Endothelial cell of umbilical vein (primary cell): ENCODE measurements at regions of chr1 and their contacts with region 1.

Region 1: DNA sequence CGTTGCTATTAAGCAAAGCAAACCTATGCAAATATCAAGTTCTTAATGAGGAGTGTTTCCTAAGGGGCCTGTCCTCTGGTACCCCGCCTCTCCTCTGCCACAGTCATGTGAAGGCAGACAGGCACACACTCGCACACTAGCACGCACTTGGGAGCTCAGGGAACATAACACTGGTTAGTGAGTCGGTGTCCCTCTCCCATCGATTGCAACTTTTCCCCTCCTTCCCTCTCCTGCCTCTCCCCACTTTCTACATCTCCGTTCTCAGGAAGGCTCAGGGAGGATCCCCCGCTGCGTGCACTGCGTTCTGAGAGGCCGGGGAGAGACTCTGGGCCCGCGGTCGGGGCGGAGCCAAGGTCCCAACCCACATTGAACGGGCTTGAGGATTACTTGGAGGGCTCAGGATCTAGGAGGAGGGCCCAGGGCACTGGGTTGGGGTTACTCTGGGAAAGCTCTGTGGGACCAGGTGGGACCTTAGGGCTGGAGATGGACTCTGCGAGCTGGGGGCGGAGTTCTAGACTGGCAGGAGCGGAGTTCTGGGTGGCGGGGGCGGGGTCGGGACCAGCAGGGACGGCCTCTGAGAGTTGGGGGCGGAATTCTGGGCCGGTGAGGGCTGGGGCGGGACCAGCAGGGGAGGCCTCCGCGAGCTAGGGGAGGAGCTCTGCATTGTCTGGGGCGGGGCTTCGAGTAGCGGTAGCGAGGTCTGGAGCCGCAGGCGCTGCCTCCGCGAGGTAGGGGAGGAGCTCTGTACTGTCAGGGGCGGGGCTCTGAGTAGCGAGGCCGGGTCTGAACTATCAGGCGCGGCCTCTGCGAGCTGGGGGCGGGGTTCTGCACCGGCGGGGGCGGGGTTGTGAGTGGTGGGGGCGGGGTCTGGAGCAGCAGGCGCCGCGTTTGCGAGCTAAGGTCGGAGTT is 533 bp upstream of the LEPR start:
- DNase-seq: peak; percentile 99
- H3K4me3 ChIP-seq: peak overlapping the region; percentile 64 to 76 (median 71)
- H3K27ac ChIP-seq: peak overlapping the region; percentile 62
- H3K4me1 ChIP-seq: peaks cover 37% of the 10 kb centered on the region
- H3K27me3 ChIP-seq: no peaks in the 10 kb centered on the region
- CTCF ChIP-seq: no peak
- POLR2A ChIP-seq: peak; percentile 5

Region 2: GRCh38 chr1:64877151-64877550 is 542.8 kb before region 1 on chr1:
- CTCF ChIA-PET with region 1: no interaction called
- POLR2A ChIA-PET with region 1: no interaction called
- dilution Hi-C with region 1: no loop called
- intact Hi-C with region 1: loop called (anchors 5 kb)
- DNase-seq: no peak
- H3K4me3 ChIP-seq: no peak overlapping the region
- H3K27ac ChIP-seq: peak overlapping the region; percentile 98
- H3K4me1 ChIP-seq: peaks cover 55% of the 10 kb centered on the region
- H3K27me3 ChIP-seq: no peaks in the 10 kb centered on the region
- CTCF ChIP-seq: no peak
- POLR2A ChIP-seq: no peak

Region 3: DNA sequence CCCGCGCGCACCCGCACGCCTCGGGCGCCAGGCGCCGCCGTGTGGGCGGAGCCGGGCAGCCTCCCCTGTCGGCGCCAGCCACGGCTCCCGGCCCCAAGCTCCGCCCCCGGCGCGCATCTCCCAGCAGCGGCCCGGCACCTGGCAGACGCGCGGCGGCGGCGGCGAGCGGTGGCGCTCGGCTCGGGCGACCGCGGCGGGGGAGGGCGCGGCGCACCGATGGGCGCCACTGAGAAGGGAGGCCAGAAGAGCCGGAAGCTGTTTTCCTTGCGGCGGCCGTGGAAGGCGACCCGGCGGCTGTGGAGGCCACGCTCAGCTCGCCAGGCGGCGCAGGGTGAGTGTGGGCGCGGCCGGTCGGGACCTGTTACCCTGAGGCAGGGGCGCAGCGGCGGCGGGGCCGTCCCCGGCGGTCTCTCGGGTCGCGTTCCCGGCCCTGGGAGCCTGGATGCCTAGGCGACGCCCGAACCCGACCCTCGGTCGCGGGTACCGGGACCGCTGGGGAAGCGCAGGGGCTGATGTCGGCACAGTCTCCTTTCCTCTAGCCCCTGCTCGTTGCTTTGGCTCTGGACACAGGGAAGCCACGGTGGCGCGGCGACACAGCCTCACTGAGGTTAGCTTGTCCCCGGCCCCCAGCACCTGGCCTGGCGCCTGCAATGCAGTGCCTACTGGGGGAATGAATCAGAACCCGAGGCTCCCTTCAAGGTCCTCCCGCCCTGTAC is 165.5 kb before region 1 on chr1:
- CTCF ChIA-PET with region 1: interaction called, 6 read pairs
- POLR2A ChIA-PET with region 1: interaction called, 5 read pairs
- dilution Hi-C with region 1: no loop called
- intact Hi-C with region 1: loop called (anchors 1 kb)
- DNase-seq: peak; percentile 57
- H3K4me3 ChIP-seq: peak overlapping the region; percentile 44 to 80 (median 70)
- H3K27ac ChIP-seq: peak overlapping the region; percentile 1
- H3K4me1 ChIP-seq: peaks cover 13% of the 10 kb centered on the region
- H3K27me3 ChIP-seq: no peaks in the 10 kb centered on the region
- CTCF ChIP-seq: peak in 1 of 2 donors; percentile 30
- POLR2A ChIP-seq: no peak

Region 4: DNA sequence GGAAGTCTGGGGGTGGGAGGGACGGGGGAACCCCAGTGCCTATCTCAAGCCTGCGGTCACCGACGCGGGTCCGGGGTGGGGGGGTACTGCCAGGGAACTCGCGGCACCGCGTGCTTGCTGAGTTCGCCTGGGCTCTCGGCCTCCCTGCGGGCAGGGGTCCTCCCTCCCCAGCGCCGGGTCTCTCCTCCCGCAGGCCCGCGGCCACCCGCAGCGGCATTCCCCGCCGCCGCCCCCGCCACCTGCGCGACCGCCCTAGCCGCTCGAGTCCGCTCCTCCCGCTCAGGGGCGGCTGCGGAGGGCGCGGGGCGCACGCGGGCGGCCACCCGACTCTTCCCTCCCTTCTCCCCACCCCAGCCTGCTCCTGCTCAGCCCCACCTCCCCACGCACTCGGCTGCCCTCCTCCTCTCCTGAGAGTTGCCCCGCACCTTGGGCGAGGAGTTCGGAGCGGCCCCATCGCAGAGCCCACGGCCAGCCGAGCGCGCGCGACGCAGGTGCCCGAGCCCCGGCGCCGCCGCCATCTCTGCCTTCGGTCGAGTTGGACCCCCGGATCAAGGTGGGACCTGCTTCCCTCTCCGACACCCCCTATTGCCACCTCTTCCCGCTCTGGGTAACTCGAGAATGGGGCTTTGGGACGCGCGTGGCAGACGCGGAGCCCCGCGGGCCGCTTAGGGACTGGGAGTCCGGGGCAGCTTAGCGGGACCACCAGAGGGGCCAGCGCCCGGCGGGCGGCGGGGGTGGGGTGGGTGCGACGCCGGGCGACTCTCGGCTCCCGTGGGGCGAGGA is 105.5 kb after region 1 on chr1:
- CTCF ChIA-PET with region 1: no interaction called
- POLR2A ChIA-PET with region 1: no interaction called
- dilution Hi-C with region 1: no loop called
- intact Hi-C with region 1: loop called (anchors 2 kb)
- DNase-seq: no peak
- H3K4me3 ChIP-seq: peak overlapping the region; percentile 34 to 84 (median 38)
- H3K27ac ChIP-seq: no peak overlapping the region
- H3K4me1 ChIP-seq: peaks cover 27% of the 10 kb centered on the region
- H3K27me3 ChIP-seq: no peaks in the 10 kb centered on the region
- CTCF ChIP-seq: no peak
- POLR2A ChIP-seq: no peak

Region 5: DNA sequence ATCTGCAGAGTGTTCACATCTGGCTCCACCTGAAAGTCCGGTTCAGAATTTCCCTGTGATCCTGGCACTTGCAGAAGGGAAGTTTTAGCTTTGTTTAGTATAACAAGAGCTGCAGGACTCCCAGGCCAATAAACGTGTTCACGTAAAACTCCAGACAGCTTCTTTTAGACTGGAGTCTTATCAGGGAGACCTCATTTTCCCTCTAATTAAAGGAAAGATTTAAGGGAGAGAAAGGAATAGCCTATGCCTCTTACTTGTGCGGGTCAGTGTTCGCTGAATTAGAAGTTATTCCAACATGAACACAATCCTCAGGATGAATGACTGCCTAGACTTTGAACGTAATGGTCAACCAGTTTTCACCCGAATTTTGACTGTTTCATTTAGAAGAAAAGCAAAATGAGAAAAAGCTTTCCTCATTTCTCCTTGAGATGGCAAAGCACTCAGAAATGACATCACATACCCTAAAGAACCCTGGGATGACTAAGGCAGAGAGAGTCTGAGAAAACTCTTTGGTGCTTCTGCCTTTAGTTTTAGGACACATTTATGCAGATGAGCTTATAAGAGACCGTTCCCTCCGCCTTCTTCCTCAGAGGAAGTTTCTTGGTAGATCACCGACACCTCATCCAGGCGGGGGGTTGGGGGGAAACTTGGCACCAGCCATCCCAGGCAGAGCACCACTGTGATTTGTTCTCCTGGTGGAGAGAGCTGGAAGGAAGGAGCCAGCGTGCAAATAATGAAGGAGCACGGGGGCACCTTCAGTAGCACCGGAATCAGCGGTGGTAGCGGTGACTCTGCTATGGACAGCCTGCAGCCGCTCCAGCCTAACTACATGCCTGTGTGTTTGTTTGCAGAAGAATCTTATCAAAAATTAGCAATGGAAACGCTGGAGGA is 912.0 kb after region 1 on chr1:
- CTCF ChIA-PET with region 1: no interaction called
- POLR2A ChIA-PET with region 1: no interaction called
- dilution Hi-C with region 1: no loop called
- intact Hi-C with region 1: loop called (anchors 5 kb)
- DNase-seq: peak; percentile 97
- H3K4me3 ChIP-seq: peak overlapping the region; percentile 77 to 98 (median 92)
- H3K27ac ChIP-seq: peak overlapping the region; percentile 95
- H3K4me1 ChIP-seq: peaks cover 30% of the 10 kb centered on the region
- H3K27me3 ChIP-seq: no peaks in the 10 kb centered on the region
- CTCF ChIP-seq: peak; percentile 21 to 57
- POLR2A ChIP-seq: peak; percentile 97

Region 6: DNA sequence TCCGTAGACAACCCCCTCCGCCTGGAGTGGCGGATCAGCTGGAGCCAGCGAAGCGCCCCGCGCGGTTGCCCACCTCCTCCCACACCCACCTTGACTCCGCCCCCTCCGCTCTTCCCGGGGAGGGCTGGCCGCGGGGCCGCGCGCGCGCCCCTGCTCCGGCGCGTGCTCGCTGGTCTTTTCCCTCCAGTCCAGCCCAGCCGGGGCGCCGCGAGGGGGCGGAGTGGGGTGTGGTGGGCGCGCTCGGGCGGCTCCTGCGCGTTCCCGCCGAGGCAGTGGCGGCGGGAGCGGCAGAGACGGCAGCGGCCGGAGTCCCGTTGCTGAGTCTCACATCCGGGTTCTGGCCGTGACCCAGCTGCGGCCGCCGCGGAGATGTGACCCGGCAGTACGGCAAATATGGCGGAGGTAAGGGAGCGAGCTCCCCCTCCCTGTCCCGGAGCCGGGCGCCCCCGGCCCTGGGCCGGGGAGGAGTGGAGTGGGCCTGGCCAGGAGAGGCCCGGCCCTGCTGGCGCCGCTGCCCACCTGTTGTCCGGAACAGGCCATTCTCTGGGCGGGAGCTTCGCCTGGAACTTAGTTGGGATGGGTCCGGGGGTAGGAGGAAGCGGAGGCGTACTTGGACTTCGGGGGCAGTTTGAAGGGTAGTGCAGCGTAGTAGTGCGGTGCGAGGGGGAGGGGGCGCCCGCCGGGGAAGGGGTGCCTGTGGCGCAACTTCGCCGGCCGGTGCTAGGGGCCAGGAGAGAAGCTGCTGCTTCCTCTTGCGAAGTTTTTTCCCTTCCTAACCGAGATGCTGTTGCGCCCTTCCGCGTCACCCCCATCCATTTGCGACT is 1510.3 kb after region 1 on chr1:
- CTCF ChIA-PET with region 1: no interaction called
- POLR2A ChIA-PET with region 1: no interaction called
- dilution Hi-C with region 1: no loop called
- intact Hi-C with region 1: loop called (anchors 5 kb)
- DNase-seq: peak; percentile 96
- H3K4me3 ChIP-seq: peak overlapping the region; percentile 98 to 99 (median 99)
- H3K27ac ChIP-seq: peak overlapping the region; percentile 84
- H3K4me1 ChIP-seq: peaks cover 52% of the 10 kb centered on the region
- H3K27me3 ChIP-seq: no peaks in the 10 kb centered on the region
- CTCF ChIP-seq: peak in 1 of 2 donors; percentile 13
- POLR2A ChIP-seq: no peak